ENCODE measurements at regions of chr11 and their contacts with region 1.

Region 1: GRCh38 chr11:10418259-10418949 is 36.7 kb upstream of the AMPD3 start:
- DNase-seq: no peak
- ATAC-seq: no peak
- H3K4me3 ChIP-seq: no peak overlapping the region
- H3K4me3 Mint-ChIP-seq: no peak overlapping the region
- H3K27ac ChIP-seq: no peak overlapping the region
- H3K27ac Mint-ChIP-seq: no peak overlapping the region
- H3K4me1 ChIP-seq: peaks cover 19% of the 10 kb centered on the region
- H3K4me1 Mint-ChIP-seq: peaks cover 21% of the 10 kb centered on the region
- H3K27me3 ChIP-seq: no peaks in the 10 kb centered on the region
- H3K27me3 Mint-ChIP-seq: no peaks in the 10 kb centered on the region
- CTCF ChIP-seq: no peak

Region 2: DNA sequence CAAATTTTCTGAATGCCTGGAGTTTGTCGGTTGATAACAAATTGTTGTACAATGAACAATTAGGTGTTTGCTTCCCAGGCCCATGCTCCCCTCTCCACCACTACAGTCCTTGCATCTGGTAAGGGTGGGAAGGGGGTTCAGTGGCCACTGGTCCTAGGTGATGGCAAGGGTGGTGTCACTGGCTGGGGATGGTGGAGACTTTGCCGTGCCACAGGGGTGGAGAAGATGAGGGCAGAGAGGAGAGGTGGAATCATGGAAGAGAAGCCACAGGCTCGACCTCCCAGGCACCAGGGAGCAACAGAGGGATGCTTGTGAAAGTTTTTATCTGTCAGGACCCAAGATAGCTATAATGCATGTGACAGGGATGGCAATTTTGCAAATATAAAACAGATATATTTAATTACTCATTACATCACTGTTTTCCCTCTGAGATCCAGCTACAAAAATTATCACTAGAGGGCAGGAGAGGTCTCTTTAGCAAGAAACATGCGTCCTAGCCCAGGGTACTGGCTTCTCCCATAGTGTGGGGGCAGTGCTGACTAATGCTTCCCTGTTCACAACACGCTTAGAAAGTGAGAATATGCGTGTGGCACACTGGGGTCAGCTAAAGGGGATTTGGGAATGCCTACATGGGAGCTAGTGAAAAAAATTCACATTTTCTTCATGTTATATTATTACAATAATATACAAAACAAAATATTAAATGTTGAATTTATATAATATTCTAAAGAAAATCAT is 12.4 kb before region 1 on chr11:
- CTCF ChIA-PET with region 1: interaction called, 11 read pairs
- POLR2A ChIA-PET with region 1: no interaction called
- intact Hi-C with region 1: no loop called
- DNase-seq: peak in 13 of 14 experiments; percentile 10 to 80 (median 24)
- ATAC-seq: peak; percentile 88
- H3K4me3 ChIP-seq: no peak overlapping the region
- H3K4me3 Mint-ChIP-seq: no peak overlapping the region
- H3K27ac ChIP-seq: no peak overlapping the region
- H3K27ac Mint-ChIP-seq: no peak overlapping the region
- H3K4me1 ChIP-seq: peaks cover 18% of the 10 kb centered on the region
- H3K4me1 Mint-ChIP-seq: peaks cover 34% of the 10 kb centered on the region
- H3K27me3 ChIP-seq: no peaks in the 10 kb centered on the region
- H3K27me3 Mint-ChIP-seq: no peaks in the 10 kb centered on the region
- CTCF ChIP-seq: peak; percentile 72